ENCODE measurements at regions of chr5 and their contacts with region 1.

Region 1: DNA sequence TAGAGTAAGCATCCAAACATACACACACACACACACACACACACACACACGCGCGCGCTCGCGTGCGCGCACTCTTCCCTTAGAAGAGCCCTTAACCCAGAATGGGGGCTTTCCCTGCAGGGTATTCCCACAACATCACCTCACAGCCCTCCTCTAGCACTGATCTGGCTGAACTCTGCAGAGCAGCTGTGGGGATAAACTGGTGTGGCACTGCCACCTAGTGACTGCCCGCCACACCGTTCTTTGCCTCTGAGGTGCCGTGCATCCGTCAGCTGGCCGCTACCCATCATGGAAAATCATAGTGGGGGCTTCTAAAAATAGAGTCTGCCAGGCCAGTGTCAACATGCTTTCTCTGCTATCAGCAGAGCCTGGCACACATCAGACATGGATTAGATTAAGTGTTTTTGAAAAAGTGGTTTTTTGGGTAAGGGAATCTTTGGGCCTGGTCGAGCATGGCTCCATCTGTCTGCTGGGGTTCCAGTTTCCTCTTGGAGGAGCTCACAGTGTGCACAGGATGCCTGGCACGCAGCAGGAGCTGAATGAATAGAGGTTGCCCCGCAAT is 88.1 kb downstream of the KCNN2 start:
- DNase-seq: peak in 4 of 5 donors; percentile 8 to 16 (median 10)
- H3K4me3 ChIP-seq: no peak overlapping the region
- H3K4me3 Mint-ChIP-seq: no peak overlapping the region
- H3K27ac ChIP-seq: no peak overlapping the region
- H3K27ac Mint-ChIP-seq: no peak overlapping the region
- H3K4me1 ChIP-seq: no peaks in the 10 kb centered on the region
- H3K4me1 Mint-ChIP-seq: peaks cover 0 to 2% (median under 1%) of the 10 kb centered on the region in 4 donors
- H3K27me3 ChIP-seq: no peaks in the 10 kb centered on the region
- H3K27me3 Mint-ChIP-seq: peaks cover 0 to 4% of the 10 kb centered on the region in 2 donors

Region 2: DNA sequence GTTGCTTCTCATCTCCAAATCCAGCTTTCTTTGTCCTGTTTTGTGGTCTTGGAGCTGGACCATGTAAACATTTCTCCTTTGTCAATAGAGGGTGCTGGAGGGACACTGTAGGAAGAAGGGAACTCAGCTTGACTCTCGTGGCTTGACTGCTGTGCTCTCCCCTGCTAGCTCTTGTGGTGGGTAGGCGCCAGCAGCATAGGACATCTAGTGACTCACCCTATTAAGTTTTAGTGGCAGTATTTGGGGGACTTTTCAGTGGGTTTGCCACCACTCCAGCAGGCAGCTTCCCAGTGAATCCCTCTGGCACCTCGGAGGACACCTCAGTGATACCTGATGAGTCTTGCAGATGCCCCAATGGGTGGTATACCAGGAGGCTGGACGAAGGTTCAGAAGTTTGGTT is 1113.0 kb before region 1 on chr5:
- CTCF ChIA-PET with region 1: no interaction called
- POLR2A ChIA-PET with region 1: no interaction called
- intact Hi-C with region 1: loop called (anchors 5 kb)
- DNase-seq: no peak
- H3K4me3 ChIP-seq: no peak overlapping the region
- H3K4me3 Mint-ChIP-seq: no peak overlapping the region
- H3K27ac ChIP-seq: no peak overlapping the region
- H3K27ac Mint-ChIP-seq: no peak overlapping the region
- H3K4me1 ChIP-seq: peaks cover 6% of the 10 kb centered on the region
- H3K4me1 Mint-ChIP-seq: peaks cover 3 to 15% (median 8%) of the 10 kb centered on the region in 4 donors
- H3K27me3 ChIP-seq: no peaks in the 10 kb centered on the region
- H3K27me3 Mint-ChIP-seq: peaks cover 0 to 3% of the 10 kb centered on the region in 2 donors

Region 3: DNA sequence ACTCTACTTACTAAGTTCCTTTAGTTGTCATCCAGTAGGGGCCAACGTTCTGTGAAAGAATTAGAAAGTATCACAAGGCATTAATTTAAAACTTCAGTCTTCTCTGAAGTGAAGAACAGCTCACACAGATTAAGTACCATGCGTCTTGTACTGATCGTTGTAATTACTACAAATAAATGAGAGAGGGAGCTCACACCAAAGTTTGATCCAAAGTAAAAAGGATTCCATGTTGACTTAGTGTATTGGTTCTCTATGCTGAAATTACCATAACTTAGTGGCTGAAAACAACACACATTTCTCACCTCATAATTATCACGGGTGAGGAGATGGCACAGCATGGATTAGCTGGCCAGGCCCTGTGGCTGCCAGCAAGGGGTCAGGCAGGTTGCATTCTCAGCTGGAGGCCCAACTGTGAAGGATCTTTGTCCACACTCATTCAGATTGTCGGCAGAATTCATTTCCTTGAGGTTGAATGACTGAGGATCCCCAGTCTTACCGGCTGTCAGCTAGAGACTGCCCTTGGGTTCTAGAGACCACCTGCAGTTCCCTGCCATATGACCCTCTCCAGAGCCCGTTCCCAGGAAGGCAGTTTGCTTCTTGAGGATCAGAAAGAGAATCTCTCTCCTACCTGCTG is 767.3 kb before region 1 on chr5:
- CTCF ChIA-PET with region 1: no interaction called
- POLR2A ChIA-PET with region 1: no interaction called
- intact Hi-C with region 1: loop called (anchors 5 kb)
- DNase-seq: no peak
- H3K4me3 ChIP-seq: no peak overlapping the region
- H3K4me3 Mint-ChIP-seq: no peak overlapping the region
- H3K27ac ChIP-seq: no peak overlapping the region
- H3K27ac Mint-ChIP-seq: no peak overlapping the region
- H3K4me1 ChIP-seq: no peaks in the 10 kb centered on the region
- H3K4me1 Mint-ChIP-seq: no peaks in the 10 kb centered on the region
- H3K27me3 ChIP-seq: no peaks in the 10 kb centered on the region
- H3K27me3 Mint-ChIP-seq: peaks cover 2 to 5% of the 10 kb centered on the region in 2 donors

Region 4: DNA sequence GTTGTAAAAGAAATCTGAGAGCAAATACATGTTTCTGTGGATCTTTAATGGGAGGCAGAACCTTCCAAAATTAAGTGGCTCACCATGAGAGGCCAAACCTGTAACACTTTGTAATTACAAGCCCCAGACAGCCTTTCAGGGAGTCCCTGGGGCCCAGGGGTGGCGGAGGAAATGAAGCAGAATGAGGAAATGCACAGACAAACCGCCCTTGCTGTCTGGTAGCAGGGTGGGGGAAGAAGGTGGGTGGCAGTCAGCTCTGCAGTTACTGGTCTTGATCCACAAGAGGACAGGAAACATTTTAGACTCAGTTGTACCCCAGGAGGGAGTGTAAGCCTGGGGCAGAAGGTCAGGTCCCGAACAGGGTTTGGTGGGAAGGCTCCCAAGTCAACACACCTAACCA is 1588.9 kb after region 1 on chr5:
- CTCF ChIA-PET with region 1: no interaction called
- POLR2A ChIA-PET with region 1: no interaction called
- intact Hi-C with region 1: no loop called
- DNase-seq: no peak
- H3K4me3 ChIP-seq: no peak overlapping the region
- H3K4me3 Mint-ChIP-seq: no peak overlapping the region
- H3K27ac ChIP-seq: no peak overlapping the region
- H3K27ac Mint-ChIP-seq: no peak overlapping the region
- H3K4me1 ChIP-seq: no peaks in the 10 kb centered on the region
- H3K4me1 Mint-ChIP-seq: no peaks in the 10 kb centered on the region
- H3K27me3 ChIP-seq: no peaks in the 10 kb centered on the region
- H3K27me3 Mint-ChIP-seq: peaks cover 12 to 16% of the 10 kb centered on the region in 2 donors